Naive thymus-derived CD4-positive, alpha-beta T cell (primary cell): ENCODE measurements at regions of chr19 and their contacts with region 1.

Region 1: GRCh38 chr19:18192673-18193387 is at the start of gene MPV17L2:
- DNase-seq: peak; percentile 90 to 100 (median 99)
- ATAC-seq: peak; percentile 92
- H3K4me3 ChIP-seq: peak within 1 kb of the TSS; percentile 78
- H3K4me3 Mint-ChIP-seq: peak within 1 kb of the TSS; percentile 88 to 99 (median 92)
- H3K27ac ChIP-seq: peak within 1 kb of the TSS; percentile 76
- H3K27ac Mint-ChIP-seq: peak within 1 kb of the TSS; percentile 80 to 99 (median 93)
- H3K4me1 ChIP-seq: peaks cover 9 to 12% of the 10 kb centered on the region in 2 donors
- H3K4me1 Mint-ChIP-seq: peaks cover 11 to 29% (median 21%) of the 10 kb centered on the region in 7 donors
- H3K27me3 ChIP-seq: no peaks in the 10 kb centered on the region
- H3K27me3 Mint-ChIP-seq: peaks cover 0 to 4% (median 0%) of the 10 kb centered on the region in 5 donors
- total RNA-seq, gene MPV17L2: 4.8 to 9.4 (median 6.7) TPM

Region 2: DNA sequence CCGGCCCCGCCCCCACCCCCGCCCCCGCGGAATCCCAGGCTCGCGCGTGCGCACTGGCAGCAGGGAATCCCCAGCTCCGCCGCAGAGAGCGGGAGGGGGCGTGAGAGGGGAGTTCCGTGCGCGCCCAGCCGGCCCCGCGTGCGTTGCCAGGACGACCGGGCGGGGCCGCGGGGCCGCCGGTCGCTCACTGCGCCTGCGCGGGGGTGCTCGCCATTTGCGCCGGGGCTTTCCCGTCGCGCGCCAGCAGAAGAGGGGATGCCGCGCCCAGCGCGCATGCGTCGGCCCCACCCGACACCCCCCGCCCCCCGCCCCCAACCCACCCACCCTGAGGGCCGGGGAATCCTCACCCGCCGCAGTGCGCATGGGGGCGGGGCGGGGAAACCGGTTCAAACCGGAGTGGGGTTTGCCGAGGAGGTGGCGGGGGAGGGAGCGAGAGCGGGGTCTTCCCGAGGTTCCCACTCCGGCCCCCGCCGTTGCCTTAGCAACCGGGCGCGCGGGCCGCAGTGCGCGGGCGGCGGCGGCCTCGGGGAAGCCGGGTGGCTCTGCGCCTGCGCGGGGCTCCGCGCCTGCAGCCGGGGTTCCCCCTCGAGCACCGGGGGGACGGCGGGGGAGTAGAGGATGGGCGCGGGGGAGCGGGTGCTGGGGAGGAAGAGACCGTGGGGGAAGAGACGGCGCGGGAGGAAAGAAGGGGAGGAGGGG is 244.9 kb before region 1 on chr19:
- CTCF ChIA-PET with region 1: no interaction called
- POLR2A ChIA-PET with region 1: no interaction called
- intact Hi-C with region 1: loop called in 1 of 2 experiments (anchors 1 kb)
- DNase-seq: peak; percentile 91 to 99 (median 95)
- ATAC-seq: peak; percentile 87
- H3K4me3 ChIP-seq: peak overlapping the region; percentile 41
- H3K4me3 Mint-ChIP-seq: peak overlapping the region; percentile 68 to 88 (median 82)
- H3K27ac ChIP-seq: peak overlapping the region; percentile 99
- H3K27ac Mint-ChIP-seq: peak overlapping the region in 7 of 9 donors; percentile 48 to 96 (median 87)
- H3K4me1 ChIP-seq: peaks cover 37 to 50% of the 10 kb centered on the region in 2 donors
- H3K4me1 Mint-ChIP-seq: peaks cover 22 to 55% (median 43%) of the 10 kb centered on the region in 7 donors
- H3K27me3 ChIP-seq: peaks cover 18 to 28% of the 10 kb centered on the region in 2 donors
- H3K27me3 Mint-ChIP-seq: peaks cover 27 to 43% (median 30%) of the 10 kb centered on the region in 5 donors

Region 3: GRCh38 chr19:18160971-18161635 is 31.7 kb before region 1 on chr19:
- CTCF ChIA-PET with region 1: interaction called, 3 read pairs
- POLR2A ChIA-PET with region 1: interaction called, 4 read pairs
- intact Hi-C with region 1: loop called in 1 of 2 experiments (anchors 1 kb)
- DNase-seq: peak; percentile 64 to 96 (median 80)
- ATAC-seq: peak; percentile 100
- H3K4me3 ChIP-seq: no peak overlapping the region
- H3K4me3 Mint-ChIP-seq: peak overlapping the region in 8 of 10 donors; percentile 39 to 71 (median 56)
- H3K27ac ChIP-seq: peak overlapping the region; percentile 62
- H3K27ac Mint-ChIP-seq: peak overlapping the region in 4 of 9 donors; percentile 20 to 72 (median 45)
- H3K4me1 ChIP-seq: peaks cover 0 to 13% of the 10 kb centered on the region in 2 donors
- H3K4me1 Mint-ChIP-seq: peaks cover 0 to 18% (median 12%) of the 10 kb centered on the region in 7 donors
- H3K27me3 ChIP-seq: no peaks in the 10 kb centered on the region
- H3K27me3 Mint-ChIP-seq: no peaks in the 10 kb centered on the region

Region 4: DNA sequence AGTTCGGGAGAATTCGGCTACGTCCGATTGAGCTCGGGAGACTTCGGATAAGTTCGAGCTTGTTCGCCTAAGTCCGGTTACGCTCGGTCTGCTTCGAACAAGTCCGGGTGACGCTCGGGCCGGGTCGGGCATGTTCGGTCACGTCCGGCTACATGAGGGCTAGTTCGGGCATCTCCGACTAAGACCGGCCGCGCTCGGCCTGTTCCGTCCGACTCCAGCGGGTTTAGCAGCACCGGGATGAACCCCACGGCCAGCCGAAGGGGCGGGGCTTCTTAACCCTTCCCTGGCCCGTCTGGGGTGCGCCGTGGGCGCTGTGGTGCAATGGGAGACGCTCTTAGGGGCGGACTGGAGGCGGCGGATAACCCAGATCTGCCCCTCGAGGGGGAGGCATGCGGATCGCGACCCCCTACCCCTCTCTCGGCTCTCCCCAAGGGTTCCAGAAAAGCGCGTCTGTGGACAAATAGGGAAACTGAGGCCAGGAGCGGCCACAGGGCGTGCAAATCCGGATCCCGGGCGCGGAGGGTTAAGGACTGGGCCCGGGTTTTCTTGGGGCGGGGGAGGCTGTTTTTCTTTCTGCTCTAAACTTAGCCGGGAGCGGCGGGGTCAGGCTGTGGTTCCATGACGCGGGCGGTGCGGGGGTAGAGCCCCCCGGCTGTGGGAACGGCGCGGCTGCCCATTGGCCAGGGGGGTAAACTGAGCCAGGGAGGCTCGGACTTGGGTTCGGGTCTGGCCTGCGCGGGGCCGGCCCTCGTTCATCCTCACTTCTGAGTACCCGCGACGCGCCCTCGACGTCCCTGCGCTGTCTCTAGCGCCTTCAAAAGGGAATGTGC is 31.9 kb after region 1 on chr19:
- CTCF ChIA-PET with region 1: interaction called, 3 read pairs
- POLR2A ChIA-PET with region 1: interaction called, 4 read pairs
- intact Hi-C with region 1: loop called in 1 of 2 experiments (anchors 1 kb)
- DNase-seq: peak; percentile 65 to 87 (median 80)
- ATAC-seq: peak; percentile 98
- H3K4me3 ChIP-seq: peak overlapping the region; percentile 46
- H3K4me3 Mint-ChIP-seq: peak overlapping the region; percentile 80 to 90 (median 87)
- H3K27ac ChIP-seq: no peak overlapping the region
- H3K27ac Mint-ChIP-seq: peak overlapping the region in 2 of 9 donors; percentile 41 to 68
- H3K4me1 ChIP-seq: peaks cover 6 to 16% of the 10 kb centered on the region in 2 donors
- H3K4me1 Mint-ChIP-seq: peaks cover 11 to 25% (median 20%) of the 10 kb centered on the region in 7 donors
- H3K27me3 ChIP-seq: peaks cover 12 to 28% of the 10 kb centered on the region in 2 donors
- H3K27me3 Mint-ChIP-seq: peaks cover 43 to 66% (median 56%) of the 10 kb centered on the region in 5 donors

Region 5: GRCh38 chr19:18322759-18323460 is 130.1 kb after region 1 on chr19 and contains the start of gene LSM4:
- CTCF ChIA-PET with region 1: interaction called, 3 read pairs
- POLR2A ChIA-PET with region 1: interaction called, 3 read pairs
- intact Hi-C with region 1: loop called (anchors 1 kb)
- DNase-seq: peak; percentile 95 to 100 (median 99)
- ATAC-seq: peak; percentile 98
- H3K4me3 ChIP-seq: peak within 1 kb of the TSS; percentile 86
- H3K4me3 Mint-ChIP-seq: peak within 1 kb of the TSS; percentile 80 to 88 (median 84)
- H3K27ac ChIP-seq: peak within 1 kb of the TSS; percentile 94
- H3K27ac Mint-ChIP-seq: peak within 1 kb of the TSS; percentile 89 to 99 (median 95)
- H3K4me1 ChIP-seq: peaks cover 47 to 55% of the 10 kb centered on the region in 2 donors
- H3K4me1 Mint-ChIP-seq: peaks cover 42 to 58% (median 51%) of the 10 kb centered on the region in 7 donors
- H3K27me3 ChIP-seq: no peaks in the 10 kb centered on the region
- H3K27me3 Mint-ChIP-seq: no peaks in the 10 kb centered on the region
- total RNA-seq, gene LSM4: 45.3 to 131 (median 56.2) TPM

Region 6: DNA sequence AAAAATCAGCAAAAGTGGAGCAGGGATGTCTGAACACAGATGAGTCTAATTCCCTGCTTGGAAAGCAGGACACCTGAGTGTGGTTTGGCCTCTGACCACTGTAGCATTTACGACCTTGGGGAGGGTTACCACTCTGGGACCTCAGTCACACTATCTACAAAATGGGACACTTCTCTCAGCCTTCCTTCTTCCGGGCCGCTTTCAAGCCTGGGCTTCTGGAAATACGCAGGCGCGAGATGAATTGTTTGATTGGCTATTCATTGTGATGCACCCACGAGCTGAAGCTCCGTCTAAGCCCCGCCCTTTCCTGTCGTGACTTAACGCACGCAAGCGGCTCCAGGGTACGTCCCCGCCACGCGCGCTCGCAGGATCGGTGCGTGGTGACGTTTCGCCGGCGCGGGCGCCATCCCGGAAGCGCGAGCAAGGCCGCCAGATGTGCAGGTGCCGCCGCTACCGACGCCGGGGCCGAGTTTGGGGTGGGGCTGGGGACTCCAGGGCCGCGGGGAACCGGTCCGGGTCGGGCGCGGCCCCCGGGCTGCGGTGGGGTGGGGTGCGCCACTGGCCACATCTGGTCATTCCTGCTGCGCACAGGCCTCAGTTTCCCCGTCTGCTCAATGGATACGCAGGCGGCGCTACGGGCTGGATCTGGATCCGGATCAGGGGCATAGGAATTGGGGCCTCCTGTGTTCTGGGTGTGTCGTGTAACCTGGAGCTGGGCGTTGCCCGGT is 364.8 kb after region 1 on chr19 and contains the start of gene KXD1:
- CTCF ChIA-PET with region 1: no interaction called
- POLR2A ChIA-PET with region 1: no interaction called
- intact Hi-C with region 1: loop called in 1 of 2 experiments (anchors 1 kb)
- DNase-seq: peak; percentile 89 to 99 (median 97)
- ATAC-seq: peak; percentile 100
- H3K4me3 ChIP-seq: peak within 1 kb of the TSS; percentile 84
- H3K4me3 Mint-ChIP-seq: peak within 1 kb of the TSS; percentile 83 to 93 (median 91)
- H3K27ac ChIP-seq: peak within 1 kb of the TSS; percentile 95
- H3K27ac Mint-ChIP-seq: peak within 1 kb of the TSS; percentile 87 to 97 (median 96)
- H3K4me1 ChIP-seq: peaks cover 13 to 15% of the 10 kb centered on the region in 2 donors
- H3K4me1 Mint-ChIP-seq: peaks cover 6 to 25% (median 23%) of the 10 kb centered on the region in 7 donors
- H3K27me3 ChIP-seq: no peaks in the 10 kb centered on the region
- H3K27me3 Mint-ChIP-seq: no peaks in the 10 kb centered on the region
- total RNA-seq, gene KXD1: 74.7 to 108 (median 99.9) TPM